ENCODE measurements at regions of chr9 and their contacts with region 1.

Region 1: GRCh38 chr9:27033823-27034403 is 28.4 kb upstream of the LRRC19 start:
- DNase-seq: peak; percentile 78
- H3K4me3 Mint-ChIP-seq: no peak overlapping the region
- H3K27ac Mint-ChIP-seq: no peak overlapping the region
- H3K4me1 Mint-ChIP-seq: no peaks in the 10 kb centered on the region
- H3K27me3 Mint-ChIP-seq: no peaks in the 10 kb centered on the region

Region 2: GRCh38 chr9:27094640-27095298 is 60.9 kb after region 1 on chr9:
- CTCF ChIA-PET with region 1: no interaction called
- intact Hi-C with region 1: no loop called
- DNase-seq: no peak
- H3K4me3 Mint-ChIP-seq: no peak overlapping the region
- H3K27ac Mint-ChIP-seq: no peak overlapping the region
- H3K4me1 Mint-ChIP-seq: no peaks in the 10 kb centered on the region
- H3K27me3 Mint-ChIP-seq: peaks cover 11% of the 10 kb centered on the region

Region 3: DNA sequence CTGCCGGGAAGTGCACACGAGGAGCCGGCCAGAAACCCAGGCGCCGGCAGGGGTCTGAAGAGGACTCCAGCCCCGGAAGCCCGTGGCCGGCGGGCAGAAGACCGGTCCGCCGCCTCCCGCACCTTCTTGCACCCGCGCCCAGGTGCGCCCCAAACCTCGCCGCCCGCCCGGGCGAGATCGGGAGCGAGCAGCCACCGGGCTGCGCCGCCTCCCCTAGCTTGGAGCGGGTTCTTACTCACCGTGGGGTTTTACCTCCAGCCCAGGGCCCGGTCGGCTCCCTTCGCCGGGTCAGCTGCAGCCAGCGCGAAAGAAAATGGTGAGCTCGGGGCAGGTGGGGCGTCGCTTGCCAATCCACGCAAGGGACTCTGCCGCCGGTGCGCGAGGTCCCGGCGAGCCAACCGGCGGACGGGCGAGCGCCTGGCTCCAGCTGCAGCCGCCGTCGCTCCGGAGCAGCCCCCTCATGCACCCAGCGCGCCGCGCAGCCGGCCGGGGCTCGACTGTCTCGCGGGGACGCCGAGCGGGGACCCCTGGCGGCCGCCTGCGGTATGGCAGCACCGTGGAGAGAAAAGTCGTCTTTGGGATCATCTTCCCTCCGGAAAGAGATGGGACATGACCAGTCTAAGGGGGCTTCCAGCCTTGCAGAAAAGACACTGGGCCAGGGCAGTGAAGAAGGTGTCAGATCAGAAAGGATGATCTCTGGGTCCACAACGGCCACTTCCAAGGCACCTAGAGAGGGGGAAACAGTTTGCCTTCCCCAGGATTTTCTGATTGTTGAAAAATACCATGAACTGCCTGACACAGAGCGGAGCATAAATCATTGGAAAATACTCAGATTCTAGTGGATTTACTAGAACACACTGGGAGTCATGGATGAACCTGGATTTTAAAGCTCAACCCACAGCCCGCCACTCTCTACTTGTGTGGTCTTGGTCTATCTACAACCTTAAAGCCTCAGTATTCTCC is 495.7 kb after region 1 on chr9 and contains the start of gene MOB3B:
- CTCF ChIA-PET with region 1: no interaction called
- intact Hi-C with region 1: loop called (anchors 5 kb)
- DNase-seq: peak; percentile 80
- H3K4me3 Mint-ChIP-seq: peak within 1 kb of the TSS; percentile 86
- H3K27ac Mint-ChIP-seq: peak within 1 kb of the TSS; percentile 86
- H3K4me1 Mint-ChIP-seq: peaks cover 10% of the 10 kb centered on the region
- H3K27me3 Mint-ChIP-seq: peaks cover 8% of the 10 kb centered on the region
- total RNA-seq, gene MOB3B: 3.0 to 3.2 TPM

Region 4: GRCh38 chr9:27548055-27548741 is 514.3 kb after region 1 on chr9:
- CTCF ChIA-PET with region 1: no interaction called
- intact Hi-C with region 1: loop called (anchors 5 kb)
- DNase-seq: no peak
- H3K4me3 Mint-ChIP-seq: no peak overlapping the region
- H3K27ac Mint-ChIP-seq: no peak overlapping the region
- H3K4me1 Mint-ChIP-seq: no peaks in the 10 kb centered on the region
- H3K27me3 Mint-ChIP-seq: no peaks in the 10 kb centered on the region

Measured in activated naive CD4-positive, alpha-beta T cell treated with anti-CD3 and anti-CD28 coated beads for 36 hours (primary cell).